Activated CD4-positive, alpha-beta memory T cell treated with anti-CD3 and anti-CD28 coated beads for 36 hours (primary cell): ENCODE measurements at regions of chr10 and their contacts with region 1.

Region 1: GRCh38 chr10:88553116-88553752 is 29.9 kb downstream of the RNLS start:
- DNase-seq: peak; percentile 49
- H3K4me3 Mint-ChIP-seq: no peak overlapping the region
- H3K27ac Mint-ChIP-seq: no peak overlapping the region
- H3K4me1 Mint-ChIP-seq: no peaks in the 10 kb centered on the region
- H3K27me3 Mint-ChIP-seq: no peaks in the 10 kb centered on the region

Region 2: DNA sequence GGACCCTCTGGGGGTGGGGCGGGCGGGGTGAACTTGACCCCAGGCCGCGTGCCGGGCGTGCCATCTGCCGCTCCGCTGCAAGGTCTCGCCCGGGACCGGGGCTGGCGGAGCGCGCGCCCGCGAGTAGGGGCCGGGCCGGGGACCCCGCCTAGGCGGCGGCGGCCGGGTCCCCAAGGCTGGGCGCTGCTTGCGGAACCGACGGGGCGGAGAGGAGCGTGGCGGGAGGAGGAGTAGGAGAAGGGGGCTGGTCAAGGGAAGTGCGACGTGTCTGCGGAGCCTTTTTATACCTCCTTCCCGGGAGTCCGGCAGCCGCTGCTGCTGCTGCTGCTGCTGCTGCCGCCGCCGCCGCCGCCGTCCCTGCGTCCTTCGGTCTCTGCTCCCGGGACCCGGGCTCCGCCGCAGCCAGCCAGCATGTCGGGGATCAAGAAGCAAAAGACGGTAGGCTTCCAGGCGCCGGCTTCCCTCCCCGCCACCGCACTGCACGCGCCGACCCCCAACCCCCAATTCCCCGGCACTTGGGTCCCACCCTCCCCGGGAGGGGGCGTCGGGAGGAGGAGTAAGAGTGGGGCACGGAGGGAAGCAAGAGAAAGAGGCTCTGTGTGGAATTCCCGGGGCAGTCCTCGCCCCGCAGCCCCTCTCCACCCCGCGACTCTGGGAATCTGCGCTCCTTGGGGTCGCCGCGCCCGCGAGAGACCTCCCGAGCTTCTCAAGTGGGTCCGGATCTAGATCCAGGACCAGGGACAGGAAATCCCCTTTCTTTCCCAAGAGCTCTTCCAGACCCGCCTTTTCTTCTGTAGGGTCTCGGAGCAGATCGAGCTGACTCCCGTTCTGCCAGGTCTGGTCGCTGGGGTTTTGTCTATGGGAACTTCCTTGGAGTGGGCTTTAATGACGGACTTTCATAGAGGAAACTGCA is 893.4 kb before region 1 on chr10 and contains the start of gene PAPSS2:
- CTCF ChIA-PET with region 1: no interaction called
- POLR2A ChIA-PET with region 1: no interaction called
- intact Hi-C with region 1: loop called (anchors 5 kb)
- DNase-seq: peak; percentile 34
- H3K4me3 Mint-ChIP-seq: peak within 1 kb of the TSS; percentile 66
- H3K27ac Mint-ChIP-seq: no peak within 1 kb of the TSS
- H3K4me1 Mint-ChIP-seq: peaks cover 13% of the 10 kb centered on the region
- H3K27me3 Mint-ChIP-seq: peaks cover 53% of the 10 kb centered on the region
- total RNA-seq, gene PAPSS2: 0.22 to 0.40 TPM

Region 3: GRCh38 chr10:87850742-87851205 is 702.5 kb before region 1 on chr10:
- CTCF ChIA-PET with region 1: interaction called, 24 read pairs
- POLR2A ChIA-PET with region 1: no interaction called
- intact Hi-C with region 1: no loop called
- DNase-seq: peak; percentile 64
- H3K4me3 Mint-ChIP-seq: no peak overlapping the region
- H3K27ac Mint-ChIP-seq: no peak overlapping the region
- H3K4me1 Mint-ChIP-seq: peaks cover 8% of the 10 kb centered on the region
- H3K27me3 Mint-ChIP-seq: no peaks in the 10 kb centered on the region

Region 4: DNA sequence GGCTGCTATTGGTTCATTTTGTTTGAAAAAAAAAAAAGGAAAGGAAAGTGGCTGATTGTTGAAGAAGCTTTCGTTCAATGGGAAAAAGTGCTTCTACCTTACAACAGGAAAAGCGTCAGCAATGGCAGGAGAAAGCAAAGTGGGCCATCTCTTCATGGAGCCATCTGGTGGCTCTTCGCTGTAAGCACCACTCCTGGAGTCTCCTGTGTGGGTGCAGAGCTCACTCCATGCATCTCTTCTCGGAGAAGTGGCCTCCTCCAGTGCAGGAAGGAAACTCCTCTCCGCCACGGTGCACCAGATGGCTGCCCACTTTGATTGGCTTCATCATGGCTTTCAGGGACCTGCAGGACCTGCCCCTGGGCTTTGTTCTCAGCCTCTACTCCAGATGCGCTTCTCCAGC is 438.9 kb before region 1 on chr10:
- CTCF ChIA-PET with region 1: no interaction called
- POLR2A ChIA-PET with region 1: no interaction called
- intact Hi-C with region 1: loop called (anchors 10 kb)
- DNase-seq: peak; percentile 25
- H3K4me3 Mint-ChIP-seq: no peak overlapping the region
- H3K27ac Mint-ChIP-seq: no peak overlapping the region
- H3K4me1 Mint-ChIP-seq: peaks cover 6% of the 10 kb centered on the region
- H3K27me3 Mint-ChIP-seq: peaks cover 2% of the 10 kb centered on the region

Region 5: GRCh38 chr10:88401671-88402347 is 151.4 kb before region 1 on chr10:
- CTCF ChIA-PET with region 1: interaction called, 3 read pairs
- POLR2A ChIA-PET with region 1: no interaction called
- intact Hi-C with region 1: loop called (anchors 5 kb)
- DNase-seq: no peak
- H3K4me3 Mint-ChIP-seq: no peak overlapping the region
- H3K27ac Mint-ChIP-seq: no peak overlapping the region
- H3K4me1 Mint-ChIP-seq: peaks cover 6% of the 10 kb centered on the region
- H3K27me3 Mint-ChIP-seq: no peaks in the 10 kb centered on the region

Region 6: GRCh38 chr10:88565072-88565471 is 11.8 kb after region 1 on chr10:
- CTCF ChIA-PET with region 1: interaction called, 25 read pairs
- POLR2A ChIA-PET with region 1: no interaction called
- intact Hi-C with region 1: no loop called
- DNase-seq: no peak
- H3K4me3 Mint-ChIP-seq: no peak overlapping the region
- H3K27ac Mint-ChIP-seq: no peak overlapping the region
- H3K4me1 Mint-ChIP-seq: peaks cover 5% of the 10 kb centered on the region
- H3K27me3 Mint-ChIP-seq: no peaks in the 10 kb centered on the region